MCF 10A (cell line): ENCODE measurements at regions of chr16 and their contacts with region 1.

Region 1: DNA sequence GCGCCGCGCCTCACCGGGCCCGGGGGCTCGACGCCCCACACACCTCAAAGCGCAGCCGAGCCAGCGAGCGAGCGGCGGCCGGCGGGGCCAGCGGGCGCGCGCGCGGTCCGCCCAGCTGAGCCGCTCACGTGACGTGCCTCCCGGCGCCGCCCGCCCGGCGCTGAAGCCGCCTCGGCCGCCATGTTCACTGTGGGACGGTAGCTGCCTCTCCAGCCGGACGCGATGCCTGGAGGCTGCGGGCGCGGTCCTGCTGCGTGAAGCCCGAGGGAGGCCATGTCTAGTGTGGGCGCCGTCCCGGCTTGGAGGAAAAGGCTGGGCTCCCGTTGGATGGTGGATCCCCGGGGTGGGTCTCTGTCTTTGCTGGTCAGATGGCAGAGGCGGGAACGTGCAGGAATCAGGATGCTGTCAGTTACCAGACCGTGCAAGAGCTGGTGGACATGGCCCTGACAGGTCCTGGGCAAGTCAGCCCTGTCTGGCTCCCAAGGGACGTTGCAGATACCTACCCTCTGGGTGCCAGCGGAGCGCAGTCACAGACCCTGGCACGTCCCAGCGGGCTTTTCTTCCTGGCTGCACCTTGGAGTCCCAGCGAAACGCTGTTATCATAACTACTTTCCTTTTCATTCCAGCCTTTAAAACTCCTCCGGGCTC is at the start of gene USP31:
- DNase-seq: peak; percentile 97
- H3K4me3 Mint-ChIP-seq: peak within 1 kb of the TSS; percentile 90
- H3K27ac Mint-ChIP-seq: peak within 1 kb of the TSS; percentile 91
- H3K4me1 Mint-ChIP-seq: peaks cover 19% of the 10 kb centered on the region
- H3K27me3 Mint-ChIP-seq: no peaks in the 10 kb centered on the region
- CTCF ChIP-seq: no peak
- total RNA-seq, gene USP31: 23.0 and 26.9 TPM in 2 replicates

Region 2: DNA sequence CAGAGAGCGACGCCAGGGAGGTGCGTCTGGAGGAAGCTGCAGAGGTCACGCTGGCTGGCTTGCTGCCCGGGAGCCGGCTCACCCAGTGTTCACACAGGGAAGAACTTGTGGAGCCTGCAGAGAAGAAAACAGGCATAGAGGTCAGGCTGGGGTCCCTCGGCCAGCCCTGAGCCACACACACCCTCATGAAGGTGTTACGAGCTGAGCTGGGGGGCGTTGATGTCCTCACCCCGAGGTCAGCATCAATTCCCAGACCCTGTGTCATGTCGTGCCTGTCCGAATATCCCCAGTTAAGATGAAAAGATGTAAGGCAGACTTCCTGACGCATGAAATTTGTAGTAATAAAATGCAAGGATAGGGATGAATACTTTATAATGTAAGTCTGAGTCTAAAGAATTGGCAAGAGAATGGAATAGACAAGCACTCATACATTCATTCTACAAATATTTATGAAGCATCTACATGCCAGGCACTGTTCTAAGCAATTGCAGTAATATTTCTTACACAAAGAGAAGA is 77.3 kb before region 1 on chr16:
- CTCF ChIA-PET with region 1: no interaction called
- POLR2A ChIA-PET with region 1: interaction called, 13 read pairs
- intact Hi-C with region 1: loop called (anchors 2 kb)
- DNase-seq: peak; percentile 64
- H3K4me3 Mint-ChIP-seq: peak overlapping the region; percentile 44
- H3K27ac Mint-ChIP-seq: peak overlapping the region; percentile 82
- H3K4me1 Mint-ChIP-seq: peaks cover 19% of the 10 kb centered on the region
- H3K27me3 Mint-ChIP-seq: no peaks in the 10 kb centered on the region
- CTCF ChIP-seq: no peak

Region 3: DNA sequence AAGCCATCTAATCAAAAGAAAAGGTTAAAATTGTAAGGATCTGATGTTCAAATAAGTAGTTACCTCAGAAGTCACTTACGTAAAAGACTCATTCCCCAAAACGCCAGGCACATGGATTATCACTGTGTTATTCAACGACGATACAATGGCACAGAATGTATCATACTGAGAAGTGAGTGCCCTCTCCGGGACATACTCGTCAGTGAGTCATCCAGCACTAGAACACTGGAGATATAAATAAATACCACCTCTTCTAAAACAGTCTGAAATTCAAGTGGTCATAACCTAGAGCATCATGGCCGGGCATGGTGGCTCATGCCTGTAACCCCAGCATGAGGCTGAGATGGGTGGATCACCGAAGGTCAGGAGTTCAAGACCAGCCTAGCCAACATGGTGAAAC is 25.2 kb before region 1 on chr16:
- CTCF ChIA-PET with region 1: interaction called, 5 read pairs
- POLR2A ChIA-PET with region 1: interaction called, 63 read pairs
- intact Hi-C with region 1: no loop called
- DNase-seq: peak; percentile 84
- H3K4me3 Mint-ChIP-seq: peak overlapping the region; percentile 45
- H3K27ac Mint-ChIP-seq: peak overlapping the region; percentile 91
- H3K4me1 Mint-ChIP-seq: peaks cover 49% of the 10 kb centered on the region
- H3K27me3 Mint-ChIP-seq: no peaks in the 10 kb centered on the region
- CTCF ChIP-seq: no peak

Region 4: DNA sequence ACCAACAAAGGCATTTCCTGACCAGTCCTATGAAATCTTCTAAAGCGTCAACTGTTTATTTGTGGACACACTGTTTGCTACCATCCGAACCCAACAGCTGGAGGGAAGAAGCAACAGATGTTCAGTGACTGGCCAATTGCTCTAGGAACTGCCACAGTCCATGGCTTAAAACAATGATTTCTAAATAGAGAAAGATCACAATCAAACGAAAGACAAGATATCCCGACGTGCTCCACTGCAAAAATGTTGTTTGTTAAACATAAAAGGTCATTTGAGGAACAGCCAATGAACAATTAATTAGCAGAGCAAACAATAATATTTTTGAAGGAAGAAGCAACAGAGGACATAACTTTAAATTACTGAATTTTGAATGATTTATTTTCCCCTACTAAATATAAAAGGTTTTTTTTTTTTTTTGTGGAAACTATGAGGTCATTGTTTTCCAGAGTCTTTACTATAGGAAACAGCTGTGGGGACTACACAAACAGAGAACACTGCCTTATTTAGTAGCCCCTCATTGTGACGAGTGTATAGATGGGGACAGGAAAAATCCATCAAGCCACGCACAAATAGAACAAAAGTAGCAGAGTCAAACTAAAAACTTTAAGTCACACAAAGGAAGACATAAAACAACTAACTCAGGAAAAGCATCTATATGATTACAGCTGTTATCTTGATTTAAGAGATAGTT is 17.4 kb before region 1 on chr16:
- CTCF ChIA-PET with region 1: interaction called, 4 read pairs
- POLR2A ChIA-PET with region 1: interaction called, 59 read pairs
- intact Hi-C with region 1: no loop called
- DNase-seq: no peak
- H3K4me3 Mint-ChIP-seq: no peak overlapping the region
- H3K27ac Mint-ChIP-seq: no peak overlapping the region
- H3K4me1 Mint-ChIP-seq: peaks cover 18% of the 10 kb centered on the region
- H3K27me3 Mint-ChIP-seq: no peaks in the 10 kb centered on the region
- CTCF ChIP-seq: no peak